OCI-LY7 (cell line): ENCODE measurements at regions of chr7 and their contacts with region 1.

Region 1: GRCh38 chr7:84823530-84823929 is 363.3 kb downstream of the SEMA3D start:
- DNase-seq: no peak
- H3K4me3 ChIP-seq: no peak overlapping the region
- H3K27ac ChIP-seq: no peak overlapping the region
- H3K4me1 ChIP-seq: no peaks in the 10 kb centered on the region
- CTCF ChIP-seq: no peak

Region 2: GRCh38 chr7:83936056-83936708 is 887.3 kb before region 1 on chr7:
- CTCF ChIA-PET with region 1: no interaction called
- POLR2A ChIA-PET with region 1: interaction called, 12 read pairs
- intact Hi-C with region 1: no loop called
- DNase-seq: peak; percentile 45
- H3K4me3 ChIP-seq: no peak overlapping the region
- H3K27ac ChIP-seq: no peak overlapping the region
- H3K4me1 ChIP-seq: no peaks in the 10 kb centered on the region
- CTCF ChIP-seq: peak; percentile 95

Region 3: GRCh38 chr7:84271543-84271942 is 552.0 kb before region 1 on chr7:
- CTCF ChIA-PET with region 1: no interaction called
- POLR2A ChIA-PET with region 1: no interaction called
- intact Hi-C with region 1: no loop called
- DNase-seq: no peak
- H3K4me3 ChIP-seq: no peak overlapping the region
- H3K27ac ChIP-seq: no peak overlapping the region
- H3K4me1 ChIP-seq: no peaks in the 10 kb centered on the region
- CTCF ChIP-seq: no peak

Region 4: DNA sequence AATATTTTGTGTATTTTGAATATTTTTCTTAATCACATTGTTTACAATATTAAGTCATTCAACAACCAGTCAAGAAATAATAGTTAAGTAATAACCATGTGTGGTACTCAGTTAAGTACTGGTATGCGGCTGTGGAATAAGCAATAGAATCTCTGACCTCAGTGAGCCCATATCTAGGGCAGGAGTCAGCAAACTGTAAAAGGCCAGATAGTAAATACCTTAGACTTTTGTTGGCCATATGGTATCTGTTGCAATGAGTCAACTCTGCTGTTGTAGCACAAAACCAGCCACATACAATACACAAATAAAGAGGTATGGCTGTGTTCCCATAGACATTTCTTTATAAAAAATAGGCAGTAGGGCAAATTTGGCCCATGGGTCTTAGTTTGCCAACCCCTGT is 317.4 kb before region 1 on chr7:
- CTCF ChIA-PET with region 1: no interaction called
- POLR2A ChIA-PET with region 1: no interaction called
- intact Hi-C with region 1: no loop called
- DNase-seq: no peak
- H3K4me3 ChIP-seq: no peak overlapping the region
- H3K27ac ChIP-seq: no peak overlapping the region
- H3K4me1 ChIP-seq: no peaks in the 10 kb centered on the region
- CTCF ChIP-seq: no peak